Endothelial cell of umbilical vein (primary cell): ENCODE measurements at regions of chr10 and their contacts with region 1.

Region 1: GRCh38 chr10:29239569-29240472 is 49.0 kb upstream of the LYZL1 start:
- DNase-seq: peak; percentile 4
- H3K4me3 ChIP-seq: no peak overlapping the region
- H3K27ac ChIP-seq: no peak overlapping the region
- H3K4me1 ChIP-seq: no peaks in the 10 kb centered on the region
- H3K27me3 ChIP-seq: peaks cover 0 to 2% of the 10 kb centered on the region in 2 experiments
- CTCF ChIP-seq: peak; percentile 39 to 52
- POLR2A ChIP-seq: no peak

Region 2: DNA sequence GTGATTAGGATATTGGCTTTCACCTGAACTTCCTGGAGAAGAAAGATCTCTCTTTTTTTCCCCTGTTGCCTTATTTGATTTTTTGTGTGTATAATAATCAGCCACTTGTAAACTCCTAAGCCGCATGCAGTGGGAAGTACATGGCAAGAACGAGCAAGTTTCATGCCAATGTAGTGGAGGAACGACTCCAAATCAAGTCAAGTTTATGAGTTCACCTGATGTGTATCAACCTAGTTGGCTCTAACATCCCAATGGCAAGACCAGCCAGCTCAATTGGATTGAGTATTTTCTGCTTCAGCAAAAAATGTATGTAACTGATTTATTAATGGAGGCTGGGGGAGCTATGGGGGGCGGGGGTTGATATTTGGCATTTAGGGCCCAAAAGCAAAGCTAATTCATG is 16.5 kb before region 1 on chr10:
- CTCF ChIA-PET with region 1: interaction called, 4 read pairs
- POLR2A ChIA-PET with region 1: no interaction called
- dilution Hi-C with region 1: no loop called
- intact Hi-C with region 1: loop called (anchors 1 kb)
- DNase-seq: no peak
- H3K4me3 ChIP-seq: no peak overlapping the region
- H3K27ac ChIP-seq: no peak overlapping the region
- H3K4me1 ChIP-seq: no peaks in the 10 kb centered on the region
- H3K27me3 ChIP-seq: peaks cover 0 to 15% of the 10 kb centered on the region in 2 experiments
- CTCF ChIP-seq: no peak
- POLR2A ChIP-seq: no peak

Region 3: DNA sequence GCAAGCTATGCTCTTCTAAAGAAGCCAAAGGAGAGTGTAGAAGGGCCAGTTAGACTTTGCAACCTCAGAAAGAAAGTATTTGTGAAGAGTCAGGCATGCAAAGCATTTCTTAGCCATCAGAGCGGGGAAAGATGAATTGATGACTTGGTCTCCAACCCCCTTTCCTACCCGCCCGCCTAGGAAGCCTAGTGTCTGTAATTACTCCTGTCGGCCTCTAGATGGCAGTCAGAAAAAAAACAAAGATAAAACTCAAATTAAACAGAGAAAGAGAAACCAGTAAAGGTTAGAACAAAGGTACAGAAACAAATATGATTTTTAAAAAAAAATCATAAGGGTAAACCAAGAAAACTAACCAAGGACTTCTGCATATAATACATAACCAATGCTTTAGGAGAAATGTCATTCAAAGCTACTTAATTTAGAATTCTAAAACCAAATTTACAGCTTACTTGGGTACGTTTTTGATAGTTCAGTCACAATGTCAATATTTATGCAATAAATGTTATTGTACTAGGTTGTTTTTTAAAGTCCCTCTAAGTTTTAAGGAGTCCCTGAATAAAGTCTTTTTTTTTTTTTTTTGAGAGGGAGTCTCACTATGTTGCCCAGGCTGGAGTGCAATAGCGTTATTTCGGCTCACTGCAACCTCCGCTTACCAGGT is 146.7 kb after region 1 on chr10:
- CTCF ChIA-PET with region 1: no interaction called
- POLR2A ChIA-PET with region 1: no interaction called
- dilution Hi-C with region 1: no loop called
- intact Hi-C with region 1: no loop called
- DNase-seq: peak; percentile 43
- H3K4me3 ChIP-seq: no peak overlapping the region
- H3K27ac ChIP-seq: no peak overlapping the region
- H3K4me1 ChIP-seq: peaks cover 4% of the 10 kb centered on the region
- H3K27me3 ChIP-seq: peaks cover 3 to 15% of the 10 kb centered on the region in 2 experiments
- CTCF ChIP-seq: peak; percentile 40 to 50
- POLR2A ChIP-seq: no peak